Calu3 (cell line): ENCODE measurements at regions of chr1 and their contacts with region 1.

Region 1: DNA sequence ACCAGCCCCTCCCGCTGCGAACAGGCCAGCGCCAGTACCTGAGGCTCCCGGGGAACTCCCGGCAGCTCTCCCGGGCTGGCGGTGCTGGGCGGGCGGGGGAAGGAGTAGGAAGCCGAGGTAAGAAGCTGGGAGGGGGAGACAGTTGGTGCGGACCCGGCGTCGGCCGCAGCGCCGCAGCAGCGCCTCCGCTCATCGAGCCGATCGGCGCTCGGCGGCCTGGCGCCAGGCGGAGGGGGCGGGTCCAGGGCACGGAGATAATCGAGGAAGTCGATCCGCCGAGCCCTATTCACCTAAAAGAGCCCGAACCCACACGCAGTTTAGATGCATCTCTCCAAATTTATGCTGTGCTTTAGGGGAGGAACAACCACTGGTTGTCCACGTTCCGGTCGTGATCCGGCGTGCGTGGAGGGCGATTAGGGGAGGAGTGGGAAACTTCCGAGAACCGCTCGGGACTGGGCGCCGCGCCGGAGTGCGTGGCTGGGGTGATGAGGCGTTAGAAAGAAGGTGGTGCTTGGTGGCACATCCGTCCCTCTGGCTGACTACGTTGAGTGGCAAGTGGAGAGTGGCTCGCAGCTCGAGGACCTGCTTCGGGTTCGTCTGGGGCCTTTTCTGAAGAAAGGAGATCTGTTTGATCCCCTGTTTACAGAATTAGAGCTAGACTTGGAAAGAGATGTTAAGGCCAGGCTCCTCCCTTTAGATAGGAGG is at the start of gene VAMP4:
- DNase-seq: peak; percentile 89
- H3K4me3 Mint-ChIP-seq: peak within 1 kb of the TSS; percentile 89
- H3K27ac Mint-ChIP-seq: peak within 1 kb of the TSS; percentile 95
- H3K4me1 Mint-ChIP-seq: peaks cover 22% of the 10 kb centered on the region
- H3K27me3 Mint-ChIP-seq: no peaks in the 10 kb centered on the region
- CTCF ChIP-seq: no peak
- total RNA-seq, gene VAMP4: 7.4 and 7.5 TPM in 2 replicates

Region 2: DNA sequence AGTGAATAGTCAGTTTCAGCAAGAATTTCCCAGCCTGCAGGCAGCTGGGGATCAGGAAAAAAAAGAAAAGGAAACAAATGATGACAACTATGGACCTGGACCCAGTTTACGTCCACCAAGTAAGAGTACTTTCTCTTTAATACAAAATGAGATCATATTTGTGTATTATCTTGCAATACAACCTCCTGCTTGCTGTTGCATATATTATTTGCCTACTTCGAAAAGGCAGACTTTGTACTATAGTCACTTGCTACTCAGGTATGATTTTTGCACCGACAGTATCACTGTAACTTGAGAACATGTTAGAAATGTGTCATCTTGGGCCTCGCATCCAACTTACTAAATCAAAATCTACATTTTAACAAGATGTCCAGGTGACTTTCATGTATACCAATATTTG is 226.3 kb before region 1 on chr1:
- CTCF ChIA-PET with region 1: no interaction called
- intact Hi-C with region 1: no loop called
- DNase-seq: no peak
- H3K4me3 Mint-ChIP-seq: no peak overlapping the region
- H3K27ac Mint-ChIP-seq: no peak overlapping the region
- H3K4me1 Mint-ChIP-seq: peaks cover under 1% of the 10 kb centered on the region
- H3K27me3 Mint-ChIP-seq: no peaks in the 10 kb centered on the region
- CTCF ChIP-seq: no peak

Region 3: GRCh38 chr1:171781176-171781875 is 39.3 kb after region 1 on chr1 and contains the start of gene METTL13:
- CTCF ChIA-PET with region 1: interaction called, 5 read pairs
- intact Hi-C with region 1: loop called (anchors 1 kb)
- DNase-seq: peak; percentile 99
- H3K4me3 Mint-ChIP-seq: peak within 1 kb of the TSS; percentile 93
- H3K27ac Mint-ChIP-seq: peak within 1 kb of the TSS; percentile 99
- H3K4me1 Mint-ChIP-seq: peaks cover 28% of the 10 kb centered on the region
- H3K27me3 Mint-ChIP-seq: no peaks in the 10 kb centered on the region
- CTCF ChIP-seq: no peak
- total RNA-seq, gene METTL13: 52.7 and 53.1 TPM in 2 replicates